Ascending aorta (tissue), 2 donors: ENCODE measurements at regions of chr3 and their contacts with region 1.

Region 1: GRCh38 chr3:42600111-42600988 is at the start of gene NKTR:
- DNase-seq: peak; percentile 89 to 97
- H3K4me3 ChIP-seq: peak within 1 kb of the TSS; percentile 85 to 89
- H3K27ac ChIP-seq: peak within 1 kb of the TSS; percentile 95 to 97
- H3K4me1 ChIP-seq: peaks cover 0 to 11% of the 10 kb centered on the region in 2 donors
- H3K27me3 ChIP-seq: no peaks in the 10 kb centered on the region
- CTCF ChIP-seq: no peak
- total RNA-seq, gene NKTR: 41.7 TPM

Region 2: GRCh38 chr3:42683875-42684598 is 83.7 kb after region 1 on chr3:
- intact Hi-C with region 1: loop called (anchors 1 kb)
- DNase-seq: peak; percentile 81 to 96
- H3K4me3 ChIP-seq: no peak overlapping the region
- H3K27ac ChIP-seq: peak overlapping the region; percentile 87 to 91
- H3K4me1 ChIP-seq: peaks cover 7 to 28% of the 10 kb centered on the region in 2 donors
- H3K27me3 ChIP-seq: no peaks in the 10 kb centered on the region
- CTCF ChIP-seq: no peak